Breast epithelium (tissue), 4 donors: ENCODE measurements at regions of chr11 and their contacts with region 1.

Region 1: GRCh38 chr11:87368858-87369480 is 331.2 kb downstream of the TMEM135 start:
- DNase-seq: no peak
- H3K4me3 ChIP-seq: no peak overlapping the region
- H3K27ac ChIP-seq: no peak overlapping the region
- H3K4me1 ChIP-seq: no peaks in the 10 kb centered on the region
- H3K27me3 ChIP-seq: no peaks in the 10 kb centered on the region
- CTCF ChIP-seq: no peak
- POLR2A ChIP-seq: no peak

Region 2: GRCh38 chr11:86938900-86939880 is 429.8 kb before region 1 on chr11:
- intact Hi-C with region 1: no loop called
- DNase-seq: no peak
- H3K4me3 ChIP-seq: no peak overlapping the region
- H3K27ac ChIP-seq: peak overlapping the region; percentile 68 to 84
- H3K4me1 ChIP-seq: peaks cover 4 to 12% of the 10 kb centered on the region in 2 donors
- H3K27me3 ChIP-seq: no peaks in the 10 kb centered on the region
- CTCF ChIP-seq: peak; percentile 56 to 71 (median 59)
- POLR2A ChIP-seq: no peak

Region 3: GRCh38 chr11:87384078-87384729 is 15.2 kb after region 1 on chr11:
- intact Hi-C with region 1: loop called (anchors 1 kb)
- DNase-seq: no peak
- H3K4me3 ChIP-seq: no peak overlapping the region
- H3K27ac ChIP-seq: no peak overlapping the region
- H3K4me1 ChIP-seq: no peaks in the 10 kb centered on the region
- H3K27me3 ChIP-seq: no peaks in the 10 kb centered on the region
- CTCF ChIP-seq: no peak
- POLR2A ChIP-seq: no peak

Region 4: GRCh38 chr11:88194990-88195389 is 826.0 kb after region 1 on chr11:
- intact Hi-C with region 1: loop called (anchors 10 kb)
- DNase-seq: no peak
- H3K4me3 ChIP-seq: no peak overlapping the region
- H3K27ac ChIP-seq: no peak overlapping the region
- H3K4me1 ChIP-seq: no peaks in the 10 kb centered on the region
- H3K27me3 ChIP-seq: no peaks in the 10 kb centered on the region
- CTCF ChIP-seq: no peak
- POLR2A ChIP-seq: no peak